ENCODE measurements at regions of chr11 and their contacts with region 1.

Region 1: DNA sequence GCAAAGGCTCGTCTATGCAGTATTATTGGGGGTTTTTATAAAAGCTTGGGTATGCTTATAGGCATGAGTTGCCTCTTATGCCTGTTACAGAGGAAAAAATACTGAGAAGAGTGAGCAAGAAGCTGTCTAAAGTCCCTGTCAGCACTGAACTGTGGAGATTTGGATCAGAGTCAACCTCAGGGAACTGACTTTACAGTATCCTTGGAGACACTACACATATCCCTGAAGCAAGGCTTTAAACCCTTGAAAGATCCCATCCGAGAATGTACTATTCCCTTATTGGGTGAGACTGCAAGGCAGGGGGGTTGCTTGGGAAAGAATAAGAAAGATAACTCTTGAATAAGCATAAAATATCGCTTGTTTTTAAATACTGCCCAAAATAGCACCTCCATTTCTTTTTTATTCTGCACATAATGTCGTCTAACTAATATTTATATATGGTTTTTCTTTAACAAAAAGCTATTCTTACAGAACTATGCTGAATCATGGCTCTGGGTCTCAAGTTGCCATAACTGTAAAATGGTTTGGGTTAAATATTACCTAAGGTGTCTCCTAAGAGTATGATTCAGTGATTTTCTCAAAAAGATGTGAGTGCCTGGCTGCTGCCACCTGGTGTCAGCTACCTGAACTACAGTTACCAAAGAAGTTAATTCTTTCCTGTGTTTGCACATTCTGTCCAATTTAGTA is 1062.8 kb downstream of the DLG2 start:
- DNase-seq: peak; percentile 75 to 83
- H3K4me3 ChIP-seq: no peak overlapping the region
- H3K4me3 Mint-ChIP-seq: peak overlapping the region; percentile 29
- H3K27ac Mint-ChIP-seq: peak overlapping the region; percentile 82
- H3K4me1 ChIP-seq: peaks cover 13% of the 10 kb centered on the region
- H3K4me1 Mint-ChIP-seq: peaks cover 10% of the 10 kb centered on the region
- H3K27me3 ChIP-seq: no peaks in the 10 kb centered on the region
- H3K27me3 Mint-ChIP-seq: no peaks in the 10 kb centered on the region
- CTCF ChIP-seq: peak; percentile 92 to 97

Region 2: DNA sequence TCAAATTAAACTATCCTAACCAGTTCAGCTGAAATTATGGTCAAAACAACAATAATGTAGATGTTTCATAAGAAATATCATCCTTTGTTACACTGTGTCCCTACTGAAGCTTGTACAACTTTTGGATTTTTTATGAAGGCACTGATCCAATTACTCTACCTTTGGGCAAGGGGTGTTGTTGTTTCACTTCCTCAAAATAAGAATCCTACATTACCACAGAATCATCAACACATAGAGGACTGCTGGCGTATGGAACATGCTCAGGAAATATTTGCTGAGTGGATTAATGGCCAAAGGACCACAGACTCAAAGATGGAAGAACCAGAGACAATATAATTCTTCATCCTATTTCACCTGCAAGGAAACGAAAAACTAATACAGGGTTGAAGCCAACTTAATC is 370.6 kb before region 1 on chr11:
- CTCF ChIA-PET with region 1: no interaction called
- POLR2A ChIA-PET with region 1: no interaction called
- intact Hi-C with region 1: no loop called
- DNase-seq: no peak
- H3K4me3 ChIP-seq: no peak overlapping the region
- H3K4me3 Mint-ChIP-seq: no peak overlapping the region
- H3K27ac Mint-ChIP-seq: no peak overlapping the region
- H3K4me1 ChIP-seq: no peaks in the 10 kb centered on the region
- H3K4me1 Mint-ChIP-seq: no peaks in the 10 kb centered on the region
- H3K27me3 ChIP-seq: no peaks in the 10 kb centered on the region
- H3K27me3 Mint-ChIP-seq: peaks cover 5% of the 10 kb centered on the region
- CTCF ChIP-seq: no peak

Region 3: GRCh38 chr11:84580428-84580827 is 16.1 kb after region 1 on chr11:
- CTCF ChIA-PET with region 1: interaction called, 4 read pairs
- POLR2A ChIA-PET with region 1: no interaction called
- intact Hi-C with region 1: loop called (anchors 2 kb)
- DNase-seq: no peak
- H3K4me3 ChIP-seq: peak overlapping the region; percentile 9; the same call in 1 of the 2 replicates
- H3K4me3 Mint-ChIP-seq: peak overlapping the region; percentile 10
- H3K27ac Mint-ChIP-seq: no peak overlapping the region
- H3K4me1 ChIP-seq: peaks cover 9% of the 10 kb centered on the region
- H3K4me1 Mint-ChIP-seq: peaks cover 5% of the 10 kb centered on the region
- H3K27me3 ChIP-seq: no peaks in the 10 kb centered on the region
- H3K27me3 Mint-ChIP-seq: no peaks in the 10 kb centered on the region
- CTCF ChIP-seq: no peak

Region 4: DNA sequence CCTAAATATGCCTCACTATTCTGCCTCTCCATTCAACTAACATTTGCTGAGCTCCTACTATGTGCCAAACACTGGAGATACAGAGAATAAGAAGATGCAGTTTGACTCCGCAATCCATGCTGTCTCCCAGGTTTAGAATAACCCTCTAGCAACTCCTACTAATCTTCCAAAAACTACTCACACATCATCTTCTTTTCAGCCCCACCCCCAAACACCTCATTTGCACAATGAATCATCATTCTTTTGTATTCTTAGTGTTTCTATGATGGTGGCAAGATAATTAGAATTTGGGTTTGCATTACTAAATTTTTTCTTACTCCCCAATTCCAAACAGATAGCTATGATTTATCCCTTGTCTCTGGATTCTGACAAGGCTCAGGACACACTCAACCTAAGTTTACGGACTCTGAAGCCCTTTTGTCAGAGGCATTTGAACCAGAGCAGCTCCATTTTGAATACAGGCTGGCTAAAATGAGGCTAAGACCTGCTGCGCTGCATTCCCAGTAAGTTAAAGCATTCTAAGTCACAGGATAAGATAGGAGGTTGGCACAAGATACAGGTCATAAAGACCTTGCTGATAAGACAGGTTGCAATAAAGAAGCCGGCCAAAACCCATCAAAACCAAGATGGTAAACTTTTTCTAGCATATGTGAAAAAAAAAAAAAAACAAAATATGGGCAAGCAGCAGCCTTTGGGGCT is 24.0 kb after region 1 on chr11:
- CTCF ChIA-PET with region 1: interaction called, 3 read pairs
- POLR2A ChIA-PET with region 1: interaction called, 3 read pairs
- intact Hi-C with region 1: loop called (anchors 2 kb)
- DNase-seq: no peak
- H3K4me3 ChIP-seq: no peak overlapping the region
- H3K4me3 Mint-ChIP-seq: no peak overlapping the region
- H3K27ac Mint-ChIP-seq: no peak overlapping the region
- H3K4me1 ChIP-seq: peaks cover 27% of the 10 kb centered on the region
- H3K4me1 Mint-ChIP-seq: peaks cover 15% of the 10 kb centered on the region
- H3K27me3 ChIP-seq: no peaks in the 10 kb centered on the region
- H3K27me3 Mint-ChIP-seq: no peaks in the 10 kb centered on the region
- CTCF ChIP-seq: no peak

Region 5: DNA sequence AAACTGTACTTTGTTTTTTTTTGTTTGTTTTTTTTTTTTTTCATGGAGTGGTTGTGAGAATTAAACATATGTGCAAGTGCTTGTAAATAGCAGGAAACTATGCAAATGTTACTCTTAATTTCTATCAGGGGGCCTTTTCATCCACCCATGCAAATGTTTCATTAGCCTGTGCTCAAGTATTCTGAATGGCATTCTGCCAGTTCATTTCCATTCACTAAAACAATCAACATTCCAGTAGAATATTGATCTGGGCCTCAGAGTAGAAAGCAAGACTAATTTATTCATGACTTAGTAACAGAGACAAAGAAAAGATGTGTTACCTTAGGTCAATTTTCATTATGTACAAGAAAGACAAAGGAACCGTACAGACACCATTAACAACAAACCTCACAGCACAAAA is 91.4 kb after region 1 on chr11:
- CTCF ChIA-PET with region 1: no interaction called
- POLR2A ChIA-PET with region 1: no interaction called
- intact Hi-C with region 1: no loop called
- DNase-seq: no peak
- H3K4me3 ChIP-seq: no peak overlapping the region
- H3K4me3 Mint-ChIP-seq: no peak overlapping the region
- H3K27ac Mint-ChIP-seq: no peak overlapping the region
- H3K4me1 ChIP-seq: no peaks in the 10 kb centered on the region
- H3K4me1 Mint-ChIP-seq: no peaks in the 10 kb centered on the region
- H3K27me3 ChIP-seq: no peaks in the 10 kb centered on the region
- H3K27me3 Mint-ChIP-seq: peaks cover 7% of the 10 kb centered on the region
- CTCF ChIP-seq: no peak

Region 6: GRCh38 chr11:84812471-84812969 is 248.2 kb after region 1 on chr11:
- CTCF ChIA-PET with region 1: no interaction called
- POLR2A ChIA-PET with region 1: no interaction called
- intact Hi-C with region 1: no loop called
- DNase-seq: no peak
- H3K4me3 ChIP-seq: no peak overlapping the region
- H3K4me3 Mint-ChIP-seq: no peak overlapping the region
- H3K27ac Mint-ChIP-seq: no peak overlapping the region
- H3K4me1 ChIP-seq: no peaks in the 10 kb centered on the region
- H3K4me1 Mint-ChIP-seq: no peaks in the 10 kb centered on the region
- H3K27me3 ChIP-seq: no peaks in the 10 kb centered on the region
- H3K27me3 Mint-ChIP-seq: peaks cover 5% of the 10 kb centered on the region
- CTCF ChIP-seq: no peak